ENCODE measurements at regions of chr11 and their contacts with region 1.

Region 1: GRCh38 chr11:28123151-28123581 is 15.0 kb downstream of the METTL15 start:
- DNase-seq: peak; percentile 82
- ATAC-seq: peak; percentile 87
- H3K4me3 ChIP-seq: peak overlapping the region; percentile 32; the same call in 1 of the 2 replicates
- H3K27ac ChIP-seq: no peak overlapping the region
- H3K4me1 ChIP-seq: peaks cover 4% of the 10 kb centered on the region
- H3K27me3 ChIP-seq: no peaks in the 10 kb centered on the region
- CTCF ChIP-seq: no peak
- POLR2A ChIP-seq: no peak
- RAD21 ChIP-seq: no peak

Region 2: DNA sequence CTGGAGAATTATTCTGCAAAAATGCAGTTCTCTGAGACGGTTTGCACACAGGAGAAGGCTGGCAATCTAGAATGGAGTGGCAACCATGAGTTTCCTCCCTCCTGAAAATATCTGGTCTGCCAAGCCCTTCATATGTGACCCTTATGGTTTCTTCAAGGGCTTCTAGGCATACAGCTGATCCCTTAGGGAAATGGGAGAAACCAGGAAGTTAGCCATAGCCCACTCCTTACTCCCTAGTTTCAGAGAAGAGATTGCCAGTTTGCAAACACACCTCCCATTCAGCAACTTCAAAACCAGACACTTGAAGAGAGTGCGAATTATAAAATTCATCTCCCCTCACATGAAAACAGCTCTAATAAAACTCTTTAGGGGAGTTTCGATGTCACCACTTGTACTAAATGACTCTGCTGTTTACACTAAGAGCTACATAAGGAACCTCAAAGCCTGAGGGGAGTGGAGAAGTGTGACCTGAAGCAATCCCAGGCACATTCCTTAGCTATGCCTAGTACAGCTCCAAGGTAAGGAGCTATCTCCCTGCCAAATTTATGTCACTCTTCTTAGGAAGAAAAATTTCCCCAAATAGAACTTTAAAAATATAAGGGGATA is 658.9 kb before region 1 on chr11:
- CTCF ChIA-PET with region 1: no interaction called
- POLR2A ChIA-PET with region 1: no interaction called
- dilution Hi-C with region 1: no loop called
- in situ Hi-C with region 1: no loop called
- intact Hi-C with region 1: no loop called
- DNase-seq: peak; percentile 44
- ATAC-seq: peak; percentile 50
- H3K4me3 ChIP-seq: no peak overlapping the region
- H3K27ac ChIP-seq: no peak overlapping the region
- H3K4me1 ChIP-seq: peaks cover 6% of the 10 kb centered on the region; the same call in 1 of the 2 replicates
- H3K27me3 ChIP-seq: no peaks in the 10 kb centered on the region
- CTCF ChIP-seq: no peak
- POLR2A ChIP-seq: no peak
- RAD21 ChIP-seq: no peak

Region 3: DNA sequence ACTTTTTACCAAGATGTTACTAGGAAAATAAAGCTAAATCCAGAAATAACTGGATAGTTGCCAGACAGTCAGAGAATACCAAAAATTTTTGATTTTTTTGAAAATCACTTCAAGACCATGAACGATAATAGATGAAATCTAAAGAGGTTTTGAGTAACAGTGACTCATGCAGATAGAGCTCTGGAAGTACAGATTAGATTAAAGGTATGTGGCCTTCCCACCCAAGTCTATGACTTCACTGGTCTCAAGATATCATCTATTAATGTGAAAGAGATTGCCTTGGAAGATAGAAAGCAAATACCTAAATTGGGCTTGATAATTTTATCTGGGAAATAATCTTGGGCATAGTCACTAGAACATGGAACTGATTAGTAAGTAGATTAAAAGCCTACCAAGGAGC is 400.9 kb after region 1 on chr11:
- CTCF ChIA-PET with region 1: no interaction called
- POLR2A ChIA-PET with region 1: no interaction called
- dilution Hi-C with region 1: no loop called
- in situ Hi-C with region 1: no loop called
- intact Hi-C with region 1: loop called (anchors 5 kb)
- DNase-seq: peak; percentile 52
- ATAC-seq: no peak
- H3K4me3 ChIP-seq: no peak overlapping the region
- H3K27ac ChIP-seq: no peak overlapping the region
- H3K4me1 ChIP-seq: peaks cover 5% of the 10 kb centered on the region
- H3K27me3 ChIP-seq: no peaks in the 10 kb centered on the region
- CTCF ChIP-seq: no peak
- POLR2A ChIP-seq: no peak
- RAD21 ChIP-seq: no peak